Astrocyte of the cerebellum (primary cell): ENCODE measurements at regions of chr15 and their contacts with region 1.

Region 1: DNA sequence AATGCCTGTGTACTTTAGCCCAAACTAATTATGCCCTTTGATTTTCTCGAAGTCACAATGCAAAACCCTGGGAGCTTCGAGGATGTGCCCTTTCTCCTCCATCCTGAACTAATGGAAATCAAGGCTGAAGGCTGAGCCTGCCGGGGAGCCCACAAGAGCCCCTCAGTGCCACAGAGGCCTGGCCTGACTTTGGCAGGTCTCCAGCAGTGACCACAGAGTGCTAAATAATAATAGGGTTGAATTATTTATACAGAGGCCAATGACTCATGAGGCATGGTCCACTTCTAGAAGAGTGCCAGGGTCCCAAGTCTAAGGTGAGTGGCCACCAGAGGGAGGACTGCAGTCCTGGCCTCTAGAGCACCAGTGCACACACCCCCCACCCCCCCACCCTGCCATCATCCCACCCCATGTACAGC is 19.1 kb upstream of the GLCE start:
- DNase-seq: no peak
- H3K4me3 ChIP-seq: no peak overlapping the region
- CTCF ChIP-seq: peak; percentile 2

Region 2: DNA sequence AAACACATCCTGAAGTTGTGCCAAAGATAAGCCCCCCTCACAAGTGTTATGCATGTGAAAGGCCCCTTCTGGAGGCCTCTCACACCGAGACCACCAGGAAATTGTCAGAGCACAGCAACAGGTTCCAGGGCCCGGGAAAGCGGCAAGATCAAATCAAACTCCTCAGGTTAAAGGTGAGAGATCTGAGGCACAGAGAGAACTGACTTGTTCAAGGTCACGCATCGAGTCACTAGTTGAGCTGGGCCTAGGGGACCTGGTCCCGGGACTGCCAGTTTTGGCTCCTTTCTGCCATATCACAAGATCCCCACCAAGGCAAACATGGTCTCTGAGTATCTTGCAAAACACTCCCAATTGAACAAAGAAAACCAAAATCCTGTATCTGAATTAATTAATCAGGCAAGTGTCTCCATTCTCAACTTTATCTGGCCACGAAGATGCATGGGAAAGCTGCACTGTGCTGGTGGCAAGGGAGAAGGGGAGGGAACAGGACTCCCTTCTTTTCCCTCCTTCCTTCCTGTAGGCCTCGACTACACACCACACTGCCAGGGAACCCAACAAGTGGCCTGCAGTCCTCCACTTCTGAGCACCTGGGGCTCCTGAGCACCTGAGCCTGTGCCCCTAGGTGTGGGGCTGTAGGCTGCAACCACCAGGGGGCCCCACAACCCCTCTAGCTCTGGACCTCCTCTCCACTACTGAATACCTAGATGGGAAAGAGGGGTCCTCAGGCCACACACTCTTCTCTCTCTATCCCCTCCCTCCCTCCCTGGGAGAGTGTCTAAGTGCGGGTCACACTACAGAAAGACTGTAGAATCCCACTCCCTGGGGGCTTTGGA is 357.9 kb before region 1 on chr15:
- in situ Hi-C with region 1: no loop called
- DNase-seq: no peak
- H3K4me3 ChIP-seq: no peak overlapping the region
- CTCF ChIP-seq: peak; percentile 59

Region 3: DNA sequence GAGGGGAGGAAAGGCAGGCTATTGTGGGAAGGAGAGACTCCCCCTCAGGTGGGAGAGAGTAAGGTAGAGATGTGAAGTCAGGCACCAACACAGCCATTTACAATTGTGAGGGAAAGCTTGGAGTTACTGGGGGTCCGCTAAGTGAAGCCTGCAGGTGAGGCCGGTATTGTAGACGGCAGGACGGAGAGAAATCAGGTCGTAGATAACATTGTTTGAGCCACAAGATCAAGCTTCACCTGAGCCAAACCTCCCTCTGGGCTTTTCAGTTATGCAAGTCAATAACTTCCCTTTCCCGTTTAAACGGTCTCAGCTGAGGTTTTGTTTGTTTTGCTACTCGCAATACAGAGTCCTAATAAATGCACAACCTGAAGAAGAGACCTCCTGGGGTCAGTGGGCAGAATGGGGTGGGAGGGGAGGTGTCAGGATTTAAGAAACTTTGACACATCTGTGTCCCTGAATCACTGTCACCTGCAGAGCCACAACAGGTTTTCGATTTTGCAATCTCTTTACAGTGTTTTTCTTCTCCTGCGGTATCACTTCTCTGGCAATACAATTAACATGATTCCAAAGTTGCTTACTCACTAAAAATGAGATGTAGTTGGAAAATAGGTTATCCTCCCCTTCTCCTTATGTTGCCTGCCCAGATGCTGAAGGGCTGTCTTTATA is 52.9 kb before region 1 on chr15:
- in situ Hi-C with region 1: loop called (anchors 5 kb)
- DNase-seq: no peak
- H3K4me3 ChIP-seq: no peak overlapping the region
- CTCF ChIP-seq: no peak